ENCODE measurements at regions of chr16 and their contacts with region 1.

Region 1: DNA sequence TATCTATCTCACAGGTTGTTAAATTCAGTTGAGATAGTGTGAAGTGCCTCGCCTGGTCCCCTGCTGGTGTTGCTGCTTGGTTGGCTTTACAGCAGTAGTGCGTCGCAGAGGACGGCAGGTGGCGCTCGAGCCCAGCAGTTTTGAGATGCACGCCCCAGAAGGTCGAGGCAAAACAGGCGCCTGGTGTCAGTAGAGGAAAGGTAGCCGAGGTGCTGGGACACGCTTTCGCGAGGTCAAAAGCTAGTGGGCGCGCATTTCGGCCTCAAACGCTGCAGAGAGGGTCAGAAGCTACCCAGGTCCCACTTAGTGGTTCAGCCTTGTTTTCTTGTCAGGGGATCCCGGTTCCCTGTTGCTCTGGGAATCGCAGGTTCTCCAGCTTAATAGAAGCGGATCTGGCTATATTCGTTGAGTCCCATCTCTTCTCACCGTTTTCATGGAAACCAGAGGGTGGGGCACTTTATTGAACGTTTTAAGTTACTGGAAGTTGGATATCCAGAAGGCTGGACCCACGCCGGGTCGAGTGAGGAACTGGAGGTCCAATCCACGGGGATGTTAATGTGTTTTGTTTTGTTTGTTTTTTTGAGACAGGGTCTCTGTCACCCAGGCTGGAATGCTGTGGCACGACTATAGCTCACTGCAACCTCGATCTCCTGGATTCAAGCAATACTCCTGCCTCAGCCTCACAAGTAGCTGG is 10.3 kb upstream of the ZFP90 start:
- DNase-seq: peak; percentile 76 to 96 (median 87)
- ATAC-seq: peak; percentile 77 to 87 (median 82)
- H3K4me3 ChIP-seq: no peak overlapping the region
- H3K4me3 Mint-ChIP-seq: peak overlapping the region; percentile 68 to 87 (median 73)
- H3K27ac ChIP-seq: no peak overlapping the region
- H3K27ac Mint-ChIP-seq: peak overlapping the region; percentile 41 to 65
- H3K4me1 ChIP-seq: peaks cover 7 to 23% of the 10 kb centered on the region in 2 experiments
- H3K4me1 Mint-ChIP-seq: peaks cover 22 to 25% (median 23%) of the 10 kb centered on the region in 3 donors
- H3K27me3 ChIP-seq: peaks cover 0 to 3% of the 10 kb centered on the region in 2 experiments
- H3K27me3 Mint-ChIP-seq: no peaks in the 10 kb centered on the region

Region 2: DNA sequence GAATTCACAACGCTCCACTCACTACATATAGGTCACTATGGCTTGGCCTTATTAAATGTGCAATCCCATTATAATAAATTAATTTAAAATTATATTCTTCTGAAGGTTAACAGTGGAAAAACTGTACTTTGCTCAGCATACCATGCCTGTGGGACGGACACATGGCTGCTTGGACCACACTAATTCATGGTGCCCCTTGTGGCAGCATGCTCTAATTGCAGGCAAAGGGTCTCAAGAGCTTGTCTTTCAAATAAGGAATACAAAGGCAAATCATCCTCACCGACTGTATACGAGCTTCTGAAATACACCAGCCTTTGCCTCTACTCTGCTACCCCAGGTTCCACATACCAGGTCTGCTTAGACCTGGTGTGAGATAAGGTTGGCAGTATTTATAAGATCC is 92.3 kb before region 1 on chr16:
- CTCF ChIA-PET with region 1: no interaction called
- POLR2A ChIA-PET with region 1: no interaction called
- DNase-seq: no peak
- ATAC-seq: no peak
- H3K4me3 ChIP-seq: no peak overlapping the region
- H3K4me3 Mint-ChIP-seq: no peak overlapping the region
- H3K27ac ChIP-seq: no peak overlapping the region
- H3K27ac Mint-ChIP-seq: no peak overlapping the region
- H3K4me1 ChIP-seq: peaks cover 6 to 15% of the 10 kb centered on the region in 2 experiments
- H3K4me1 Mint-ChIP-seq: peaks cover 16 to 28% (median 19%) of the 10 kb centered on the region in 3 donors
- H3K27me3 ChIP-seq: peaks cover 0 to 7% of the 10 kb centered on the region in 2 experiments
- H3K27me3 Mint-ChIP-seq: peaks cover 0 to 13% of the 10 kb centered on the region in 2 donors

Region 3: GRCh38 chr16:68564367-68564985 is 35.6 kb after region 1 on chr16:
- CTCF ChIA-PET with region 1: interaction called, 4 to 10 read pairs
- POLR2A ChIA-PET with region 1: no interaction called
- DNase-seq: no peak
- ATAC-seq: no peak
- H3K4me3 ChIP-seq: no peak overlapping the region
- H3K4me3 Mint-ChIP-seq: no peak overlapping the region
- H3K27ac ChIP-seq: no peak overlapping the region
- H3K27ac Mint-ChIP-seq: no peak overlapping the region
- H3K4me1 ChIP-seq: no peaks in the 10 kb centered on the region
- H3K4me1 Mint-ChIP-seq: no peaks in the 10 kb centered on the region
- H3K27me3 ChIP-seq: no peaks in the 10 kb centered on the region
- H3K27me3 Mint-ChIP-seq: no peaks in the 10 kb centered on the region

Region 4: DNA sequence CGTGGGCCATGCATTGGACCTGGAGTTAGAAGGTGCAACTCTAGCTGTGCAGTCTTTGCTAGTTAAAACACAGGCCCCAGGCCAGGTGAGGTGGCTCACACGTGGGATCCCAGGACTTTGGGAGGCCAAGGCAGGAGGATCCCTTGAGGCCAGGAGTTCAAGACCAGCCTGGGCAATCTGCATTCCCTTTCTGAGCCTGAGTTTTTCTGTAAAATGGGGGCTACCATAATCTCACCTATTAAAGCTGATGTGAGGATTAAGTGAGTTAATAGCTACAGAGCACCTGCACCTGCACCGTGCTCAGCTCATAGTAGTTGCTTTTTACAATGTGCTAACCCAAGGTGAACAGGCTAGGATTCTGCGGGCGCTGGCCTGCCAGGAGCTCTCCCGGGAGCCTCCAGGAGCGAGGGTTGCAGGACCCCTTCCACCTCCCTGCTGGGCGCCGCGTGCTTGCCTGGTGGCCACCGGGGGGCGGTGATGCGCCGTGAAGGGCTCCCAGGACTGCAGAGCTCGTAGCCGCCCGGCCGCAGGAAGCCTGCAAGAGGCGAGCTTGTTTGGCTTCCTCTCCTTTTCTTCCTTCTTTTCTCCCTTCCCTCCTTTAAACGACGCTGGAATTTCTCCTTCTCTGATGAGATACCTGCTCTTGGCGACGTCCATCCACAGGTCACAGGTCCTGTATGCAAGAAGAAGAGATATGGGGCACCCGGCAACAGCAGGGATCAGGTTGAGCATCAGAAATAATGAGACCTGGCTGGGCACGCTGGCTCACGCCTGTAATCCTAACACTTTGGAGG is 61.6 kb after region 1 on chr16:
- CTCF ChIA-PET with region 1: interaction called, 16 to 21 read pairs
- POLR2A ChIA-PET with region 1: no interaction called
- DNase-seq: peak; percentile 4 to 64 (median 44)
- ATAC-seq: peak; percentile 62 to 86 (median 78)
- H3K4me3 ChIP-seq: no peak overlapping the region
- H3K4me3 Mint-ChIP-seq: no peak overlapping the region
- H3K27ac ChIP-seq: no peak overlapping the region
- H3K27ac Mint-ChIP-seq: no peak overlapping the region
- H3K4me1 ChIP-seq: peaks cover 0 to 6% of the 10 kb centered on the region in 2 experiments
- H3K4me1 Mint-ChIP-seq: peaks cover 4 to 6% (median 5%) of the 10 kb centered on the region in 3 donors
- H3K27me3 ChIP-seq: no peaks in the 10 kb centered on the region
- H3K27me3 Mint-ChIP-seq: no peaks in the 10 kb centered on the region

Region 5: DNA sequence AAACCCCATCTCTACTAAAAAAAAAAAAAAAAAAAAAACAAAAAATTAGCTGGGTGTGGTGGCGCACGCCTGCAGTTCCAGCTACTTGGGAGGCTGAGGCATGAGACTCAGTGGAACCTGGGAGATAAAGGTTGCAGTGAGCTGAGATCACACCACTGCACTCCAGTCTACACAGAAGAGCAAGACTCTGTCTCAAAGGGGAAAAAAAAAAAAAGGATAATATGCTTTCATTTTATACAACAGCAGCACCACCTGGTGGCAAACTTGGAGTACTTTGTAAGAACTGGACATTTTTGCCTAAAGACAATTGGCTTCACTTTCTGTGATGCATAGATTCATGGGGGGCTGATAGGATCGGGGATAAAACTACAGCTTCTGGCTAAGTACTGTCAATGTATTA is 595.1 kb after region 1 on chr16:
- CTCF ChIA-PET with region 1: interaction called, 3 to 10 read pairs
- POLR2A ChIA-PET with region 1: no interaction called
- DNase-seq: peak in 33 of 35 experiments; percentile 20 to 86 (median 64)
- ATAC-seq: peak; percentile 32 to 82 (median 62)
- H3K4me3 ChIP-seq: no peak overlapping the region
- H3K4me3 Mint-ChIP-seq: no peak overlapping the region
- H3K27ac ChIP-seq: no peak overlapping the region
- H3K27ac Mint-ChIP-seq: no peak overlapping the region
- H3K4me1 ChIP-seq: peaks cover 0 to 4% of the 10 kb centered on the region in 2 experiments
- H3K4me1 Mint-ChIP-seq: peaks cover 21 to 29% (median 25%) of the 10 kb centered on the region in 3 donors
- H3K27me3 ChIP-seq: no peaks in the 10 kb centered on the region
- H3K27me3 Mint-ChIP-seq: no peaks in the 10 kb centered on the region